ENCODE measurements at regions of chr1 and their contacts with region 1.

Region 1: DNA sequence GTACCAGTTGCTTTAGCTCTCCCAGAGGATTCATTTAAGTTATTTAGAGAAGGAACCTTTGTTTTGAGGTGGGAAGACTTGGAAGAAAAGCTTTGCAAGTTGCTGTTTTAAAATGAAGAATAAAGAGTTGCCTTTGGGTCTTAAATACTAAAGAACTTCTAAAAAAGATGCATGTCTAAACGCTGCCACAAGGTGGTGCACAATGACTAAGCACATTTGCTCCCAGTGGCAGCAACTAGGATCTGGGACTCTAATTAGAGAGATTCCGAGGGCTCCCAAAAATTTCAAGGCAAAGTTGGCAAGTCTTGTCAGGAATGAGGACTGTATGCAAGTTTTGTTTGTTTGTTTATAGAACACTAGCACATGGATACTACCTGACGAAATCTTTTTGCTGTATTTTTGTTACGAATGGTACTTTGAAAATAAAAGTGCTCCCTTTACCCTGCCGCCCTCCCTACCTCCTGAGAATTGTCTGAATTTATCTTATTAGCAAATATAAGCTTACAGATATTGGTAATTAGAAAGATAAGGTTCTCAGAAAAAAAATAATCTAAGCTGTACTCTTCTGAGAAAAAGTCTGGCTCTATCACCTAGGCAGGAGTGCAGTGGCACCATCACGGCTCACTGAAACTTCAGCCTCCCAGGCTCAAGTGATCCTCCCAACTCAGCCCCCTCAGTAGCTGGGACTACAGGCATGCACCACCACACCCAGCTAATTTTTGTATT is 121.8 kb downstream of the HFM1 start:
- DNase-seq: peak in 4 of 5 donors; percentile 30 to 74 (median 41)
- H3K4me3 ChIP-seq: no peak overlapping the region
- H3K27ac ChIP-seq: no peak overlapping the region
- H3K4me1 ChIP-seq: no peaks in the 10 kb centered on the region
- H3K27me3 ChIP-seq: no peaks in the 10 kb centered on the region
- CTCF ChIP-seq: peak; percentile 55 to 75 (median 62)
- EP300 ChIP-seq: no peak
- POLR2A ChIP-seq: no peak

Region 2: GRCh38 chr1:91404151-91405012 is 121.5 kb after region 1 on chr1 and contains the start of gene HFM1:
- intact Hi-C with region 1: loop called in 1 of 4 experiments (anchors 10 kb)
- DNase-seq: peak; percentile 85 to 91 (median 89)
- H3K4me3 ChIP-seq: peak within 1 kb of the TSS; percentile 39
- H3K27ac ChIP-seq: peak within 1 kb of the TSS; percentile 65 to 93
- H3K4me1 ChIP-seq: no peaks in the 10 kb centered on the region
- H3K27me3 ChIP-seq: no peaks in the 10 kb centered on the region
- CTCF ChIP-seq: no peak
- EP300 ChIP-seq: peak; percentile 34
- POLR2A ChIP-seq: peak; percentile 41
- total RNA-seq, gene HFM1: 5.7 to 17.2 (median 8.5) TPM

Region 3: GRCh38 chr1:91500756-91501522 is 218.1 kb after region 1 on chr1 and contains the start of gene CDC7:
- intact Hi-C with region 1: loop called in 1 of 4 experiments (anchors 10 kb)
- DNase-seq: peak; percentile 93 to 96 (median 95)
- H3K4me3 ChIP-seq: peak within 1 kb of the TSS; percentile 56
- H3K27ac ChIP-seq: peak within 1 kb of the TSS; percentile 20 to 77
- H3K4me1 ChIP-seq: peaks cover 4% of the 10 kb centered on the region
- H3K27me3 ChIP-seq: no peaks in the 10 kb centered on the region
- CTCF ChIP-seq: peak; percentile 12 to 30 (median 28)
- EP300 ChIP-seq: no peak
- POLR2A ChIP-seq: peak; percentile 35
- total RNA-seq, gene CDC7: 1.2 to 5.5 (median 2.9) TPM

Region 4: DNA sequence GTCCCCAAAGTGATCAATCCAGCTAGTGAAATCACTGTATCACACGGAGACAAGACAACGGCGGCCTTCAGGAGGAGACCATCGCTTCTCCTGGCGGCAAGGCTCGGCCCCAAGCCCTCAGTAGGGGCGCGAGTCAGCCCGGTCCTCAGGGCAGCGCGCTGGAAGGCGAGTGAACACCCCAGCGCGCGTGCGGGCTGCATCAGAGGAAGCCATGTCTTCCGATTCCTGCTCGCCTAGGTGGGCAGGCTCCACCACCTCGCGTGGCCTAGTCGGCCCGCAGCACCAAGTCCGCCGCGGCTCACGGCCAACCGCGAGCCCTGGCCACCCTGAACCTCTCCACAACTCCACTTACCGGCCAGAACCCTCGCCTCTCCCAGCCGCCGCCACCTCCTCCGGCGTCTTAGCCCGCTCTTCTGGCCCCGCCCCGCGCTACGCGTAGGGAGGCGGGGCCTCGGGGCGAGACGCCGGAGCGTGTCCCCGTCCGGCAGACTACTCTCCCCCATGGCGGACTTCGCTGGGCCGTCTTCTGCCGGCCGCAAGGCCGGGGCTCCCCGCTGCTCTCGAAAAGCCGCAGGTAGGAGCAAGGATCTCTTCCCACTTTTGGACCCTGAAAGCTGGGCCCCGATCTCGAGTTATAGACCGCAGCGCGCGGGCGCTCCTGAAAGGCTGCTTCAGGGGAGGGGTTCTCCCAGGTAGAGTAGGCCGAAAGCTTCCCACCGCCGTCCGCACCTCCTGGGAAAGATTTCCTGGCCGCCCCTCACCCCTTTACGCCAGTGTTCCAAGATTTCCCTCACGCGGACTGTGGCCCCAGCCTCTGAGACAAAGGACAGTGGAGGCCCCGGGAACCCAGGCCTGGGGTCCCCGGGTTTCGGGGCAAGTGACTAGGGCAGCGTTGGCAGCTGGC is 1016.0 kb after region 1 on chr1 and contains the starts of genes GLMN and RPAP2:
- intact Hi-C with region 1: loop called in 1 of 4 experiments (anchors 10 kb)
- DNase-seq: peak; percentile 77 to 88 (median 84)
- H3K4me3 ChIP-seq: peak within 1 kb of the TSS; percentile 66
- H3K27ac ChIP-seq: peak within 1 kb of the TSS; percentile 79 to 90
- H3K4me1 ChIP-seq: peaks cover 5% of the 10 kb centered on the region
- H3K27me3 ChIP-seq: no peaks in the 10 kb centered on the region
- CTCF ChIP-seq: no peak
- EP300 ChIP-seq: no peak
- POLR2A ChIP-seq: peak; percentile 61
- total RNA-seq, gene GLMN: 4.7 to 14.6 (median 10.5) TPM
- total RNA-seq, gene RPAP2: 6.3 to 46.4 (median 38.0) TPM